Posterior vena cava (tissue), 2 donors: ENCODE measurements at regions of chr15 and their contacts with region 1.

Region 1: DNA sequence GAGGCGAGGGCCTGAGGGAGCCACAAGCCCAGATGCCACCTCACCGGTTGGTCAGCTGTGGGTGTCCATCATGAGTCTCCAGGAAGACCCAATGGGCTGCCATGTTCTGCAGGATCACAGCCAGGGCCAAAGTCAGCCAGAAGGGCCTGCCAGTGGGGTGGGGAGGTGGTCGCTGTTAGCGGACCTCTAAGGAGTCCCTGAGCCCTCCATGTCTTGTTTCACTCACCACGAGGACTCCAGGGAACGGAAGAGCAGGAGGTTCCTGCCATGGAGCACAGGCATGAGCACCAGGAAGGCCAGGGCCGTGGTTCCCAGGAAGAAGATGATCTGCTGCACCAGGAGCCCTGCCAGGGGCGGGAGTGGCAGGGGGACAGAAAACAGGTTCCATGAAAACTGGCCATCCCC is 8.6 kb downstream of the ISLR start:
- DNase-seq: peak; percentile 68

Region 2: DNA sequence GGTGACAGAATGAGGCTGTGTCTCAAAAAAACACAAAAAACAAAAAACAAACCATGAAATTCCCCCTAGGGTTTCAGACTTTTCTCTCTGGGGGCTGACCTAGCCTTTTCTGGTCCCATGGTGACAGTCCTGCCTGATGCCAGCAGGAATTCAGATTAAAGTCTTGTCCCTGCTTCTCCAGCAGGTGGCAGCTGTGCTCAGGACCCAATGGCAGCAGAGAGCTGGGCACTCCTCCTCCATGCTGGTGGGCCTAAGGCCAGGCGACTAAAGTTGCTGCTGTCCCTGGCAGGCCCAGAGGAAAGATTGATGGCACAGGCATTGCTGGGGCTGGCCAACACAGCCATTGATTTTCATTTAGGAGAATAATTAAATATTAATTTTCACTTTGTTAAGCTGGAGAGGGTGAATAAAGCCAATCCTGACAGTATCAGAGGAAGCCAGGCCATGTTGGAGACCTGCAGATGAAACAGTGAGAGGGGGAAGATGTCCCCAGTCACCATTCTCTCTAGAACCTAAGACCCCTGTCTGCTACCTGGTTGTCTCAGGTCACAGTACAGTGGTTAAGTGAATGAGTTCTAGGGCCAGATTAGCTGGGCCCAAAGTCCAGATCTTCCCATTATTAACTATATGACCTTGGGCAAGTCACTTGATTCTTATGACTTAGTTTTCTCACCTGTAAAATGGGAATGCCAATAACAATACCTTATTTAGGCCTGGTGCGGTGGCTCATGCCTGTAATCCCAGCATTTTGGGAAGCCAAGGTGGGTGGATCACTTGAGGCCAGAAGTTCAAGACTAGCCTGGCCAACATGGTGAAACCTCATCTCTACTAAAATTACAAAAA is 1869.3 kb before region 1 on chr15:
- intact Hi-C with region 1: no loop called
- DNase-seq: peak; percentile 90

Region 3: DNA sequence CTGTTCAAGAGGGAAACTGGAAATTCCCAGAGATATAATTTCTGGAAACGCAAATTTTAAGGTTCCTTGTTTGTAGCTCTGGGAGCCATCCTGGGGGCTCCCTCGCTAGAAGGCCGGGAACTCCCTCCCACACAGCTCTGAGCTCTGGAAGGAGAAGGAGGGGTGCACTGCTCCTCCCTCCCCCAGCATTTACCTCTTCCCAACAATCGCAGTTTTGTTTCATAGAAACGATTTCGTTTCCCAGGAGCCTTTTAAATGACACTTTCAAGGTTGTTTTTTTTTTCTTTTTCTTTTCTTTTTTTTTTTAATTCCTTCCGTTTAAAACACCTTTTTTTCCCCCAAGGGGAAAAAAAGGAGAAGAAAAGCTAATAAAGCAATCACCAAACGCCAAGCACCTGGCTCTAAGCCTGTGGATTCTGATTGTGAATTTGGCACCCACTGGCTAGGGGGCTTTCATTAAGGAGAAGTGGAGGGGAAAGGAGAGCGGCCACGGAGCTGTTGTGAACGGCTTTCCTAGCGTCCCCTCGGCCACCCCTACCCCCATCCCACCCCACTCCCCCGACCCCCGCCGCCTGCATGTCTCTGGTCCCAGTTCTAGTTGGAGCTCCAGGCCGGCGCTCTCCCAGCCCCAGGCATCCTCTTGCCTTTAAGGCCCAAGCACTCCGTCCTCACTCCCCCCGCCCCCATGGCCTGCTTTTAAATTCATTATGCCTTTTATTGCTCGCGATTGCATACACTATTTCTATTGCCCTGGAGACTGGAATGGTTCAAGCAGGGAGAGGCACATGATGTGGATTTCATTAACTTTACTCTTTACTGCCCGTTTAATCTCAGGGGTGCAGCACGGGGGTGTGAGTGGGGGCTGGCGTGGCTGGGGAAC is 40.4 kb after region 1 on chr15:
- intact Hi-C with region 1: loop called in 1 of 2 experiments (anchors 1 kb)
- DNase-seq: no peak

Region 4: GRCh38 chr15:74350295-74351290 is 168.5 kb after region 1 on chr15:
- intact Hi-C with region 1: no loop called
- DNase-seq: no peak